ENCODE measurements at regions of chr12 and their contacts with region 1.

Region 1: DNA sequence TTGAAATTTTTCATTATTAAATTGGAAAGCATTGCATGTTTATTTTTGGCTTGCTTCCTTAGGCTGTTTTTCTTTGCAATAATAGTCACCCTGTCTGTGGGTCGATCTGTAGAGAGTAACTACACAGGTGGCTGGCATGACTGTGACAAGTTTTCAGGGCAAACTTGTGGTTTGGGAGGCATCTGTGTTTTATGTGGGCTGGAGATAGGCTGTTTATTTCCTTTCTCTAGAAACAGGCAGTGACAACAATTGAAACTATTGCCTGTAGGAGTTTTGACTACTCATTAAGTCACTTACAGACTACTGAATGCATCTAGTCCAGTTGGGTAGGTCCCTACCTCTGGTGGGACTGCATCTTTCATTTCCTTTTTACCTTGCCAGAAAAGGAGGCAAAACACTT is 155.6 kb downstream of the DYRK2 start:
- DNase-seq: peak; percentile 80
- H3K4me3 Mint-ChIP-seq: no peak overlapping the region
- H3K27ac Mint-ChIP-seq: no peak overlapping the region
- H3K4me1 Mint-ChIP-seq: peaks cover 11% of the 10 kb centered on the region
- H3K27me3 Mint-ChIP-seq: peaks cover 8% of the 10 kb centered on the region

Region 2: GRCh38 chr12:67690656-67691055 is 113.5 kb before region 1 on chr12:
- intact Hi-C with region 1: no loop called
- DNase-seq: no peak
- H3K4me3 Mint-ChIP-seq: no peak overlapping the region
- H3K27ac Mint-ChIP-seq: no peak overlapping the region
- H3K4me1 Mint-ChIP-seq: peaks cover 15% of the 10 kb centered on the region
- H3K27me3 Mint-ChIP-seq: peaks cover 41% of the 10 kb centered on the region

Region 3: GRCh38 chr12:67758119-67758518 is 46.0 kb before region 1 on chr12:
- intact Hi-C with region 1: loop called (anchors 2 kb)
- DNase-seq: no peak
- H3K4me3 Mint-ChIP-seq: no peak overlapping the region
- H3K27ac Mint-ChIP-seq: no peak overlapping the region
- H3K4me1 Mint-ChIP-seq: peaks cover 2% of the 10 kb centered on the region
- H3K27me3 Mint-ChIP-seq: peaks cover 1% of the 10 kb centered on the region

Region 4: GRCh38 chr12:67827820-67828383 is 23.7 kb after region 1 on chr12:
- intact Hi-C with region 1: loop called (anchors 1 kb)
- DNase-seq: peak; percentile 63
- H3K4me3 Mint-ChIP-seq: peak overlapping the region; percentile 17
- H3K27ac Mint-ChIP-seq: peak overlapping the region; percentile 75
- H3K4me1 Mint-ChIP-seq: peaks cover 11% of the 10 kb centered on the region
- H3K27me3 Mint-ChIP-seq: no peaks in the 10 kb centered on the region